ENCODE measurements at regions of chr6 and their contacts with region 1.

Region 1: DNA sequence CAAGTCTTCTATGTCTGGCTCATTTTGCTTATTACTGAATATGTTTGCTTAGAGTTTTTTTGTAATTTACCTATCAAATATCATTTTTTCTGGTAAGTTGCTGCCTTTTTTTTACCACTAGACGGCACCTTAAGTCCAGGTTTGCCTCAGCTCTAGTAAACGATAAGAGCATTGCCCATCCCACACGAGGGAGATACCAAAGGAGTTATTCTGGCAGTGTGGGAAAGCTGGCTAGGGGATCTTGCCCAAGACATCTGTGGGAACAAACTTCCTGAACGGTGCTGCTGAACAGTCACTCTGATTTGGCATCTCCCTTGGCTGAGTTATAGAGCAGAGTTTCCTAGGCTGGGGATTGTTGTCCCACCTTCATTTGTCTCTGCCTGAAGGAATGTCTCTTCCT is 306.4 kb downstream of the COL12A1 start:
- H3K4me3 Mint-ChIP-seq: no peak overlapping the region
- H3K27ac Mint-ChIP-seq: no peak overlapping the region
- H3K4me1 Mint-ChIP-seq: no peaks in the 10 kb centered on the region
- H3K27me3 Mint-ChIP-seq: no peaks in the 10 kb centered on the region

Region 2: DNA sequence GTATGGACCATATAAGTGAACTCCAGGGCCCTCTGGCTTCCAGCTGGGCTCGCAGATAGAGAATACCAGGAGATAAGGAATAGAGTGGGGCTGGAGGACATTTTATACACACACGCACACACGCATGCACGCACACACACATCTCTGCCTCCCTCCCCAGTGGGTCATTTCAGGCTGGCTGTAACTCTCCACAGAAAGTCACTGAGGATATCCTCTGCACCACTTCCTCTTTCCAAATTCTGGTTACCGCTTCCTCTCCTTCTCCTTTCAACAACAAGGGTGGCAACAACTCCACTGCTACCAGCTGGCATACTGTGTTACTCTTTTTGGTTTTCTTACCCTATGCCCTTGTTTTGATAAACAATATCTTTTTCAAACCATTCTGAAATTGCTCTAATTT is 26.3 kb after region 1 on chr6:
- intact Hi-C with region 1: no loop called
- H3K4me3 Mint-ChIP-seq: no peak overlapping the region
- H3K27ac Mint-ChIP-seq: peak overlapping the region; percentile 42
- H3K4me1 Mint-ChIP-seq: peaks cover 9% of the 10 kb centered on the region
- H3K27me3 Mint-ChIP-seq: no peaks in the 10 kb centered on the region

Region 3: DNA sequence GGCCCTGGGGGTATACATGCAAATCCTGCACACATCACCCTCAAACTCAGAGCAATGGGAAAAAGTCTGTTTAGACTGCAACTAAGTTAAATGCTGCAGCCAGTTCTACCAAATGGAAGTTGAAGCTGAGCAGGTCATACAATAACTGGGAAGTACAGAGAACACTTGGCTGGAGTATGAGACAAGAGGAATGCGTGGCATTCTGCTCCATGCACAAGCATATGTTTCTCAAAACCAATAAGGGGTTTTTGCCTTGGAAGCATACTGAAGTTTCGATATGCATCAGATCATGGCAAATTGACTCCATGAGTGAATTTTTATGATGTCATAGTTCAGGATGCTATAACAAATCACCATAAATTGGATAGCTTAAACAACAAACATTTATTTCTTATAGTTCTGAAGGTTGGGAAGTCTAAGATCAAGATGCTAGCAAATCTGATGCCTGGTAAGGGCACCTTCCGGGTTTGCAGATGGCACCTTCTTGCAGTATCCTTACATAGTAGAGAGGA is 112.7 kb after region 1 on chr6:
- intact Hi-C with region 1: loop called (anchors 2 kb)
- H3K4me3 Mint-ChIP-seq: no peak overlapping the region
- H3K27ac Mint-ChIP-seq: no peak overlapping the region
- H3K4me1 Mint-ChIP-seq: no peaks in the 10 kb centered on the region
- H3K27me3 Mint-ChIP-seq: no peaks in the 10 kb centered on the region

Region 4: GRCh38 chr6:75472885-75473284 is 573.5 kb after region 1 on chr6:
- intact Hi-C with region 1: no loop called
- H3K4me3 Mint-ChIP-seq: no peak overlapping the region
- H3K27ac Mint-ChIP-seq: no peak overlapping the region
- H3K4me1 Mint-ChIP-seq: no peaks in the 10 kb centered on the region
- H3K27me3 Mint-ChIP-seq: no peaks in the 10 kb centered on the region

Measured in dendritic cell treated with granulocyte-macrophage colony-stimulating factor and Interleukin-4, amounts not matched to agents 40 ng/mL and 50 ng/mL, for 4 days (primary cell).